ENCODE measurements at regions of chr9 and their contacts with region 1.

Region 1: DNA sequence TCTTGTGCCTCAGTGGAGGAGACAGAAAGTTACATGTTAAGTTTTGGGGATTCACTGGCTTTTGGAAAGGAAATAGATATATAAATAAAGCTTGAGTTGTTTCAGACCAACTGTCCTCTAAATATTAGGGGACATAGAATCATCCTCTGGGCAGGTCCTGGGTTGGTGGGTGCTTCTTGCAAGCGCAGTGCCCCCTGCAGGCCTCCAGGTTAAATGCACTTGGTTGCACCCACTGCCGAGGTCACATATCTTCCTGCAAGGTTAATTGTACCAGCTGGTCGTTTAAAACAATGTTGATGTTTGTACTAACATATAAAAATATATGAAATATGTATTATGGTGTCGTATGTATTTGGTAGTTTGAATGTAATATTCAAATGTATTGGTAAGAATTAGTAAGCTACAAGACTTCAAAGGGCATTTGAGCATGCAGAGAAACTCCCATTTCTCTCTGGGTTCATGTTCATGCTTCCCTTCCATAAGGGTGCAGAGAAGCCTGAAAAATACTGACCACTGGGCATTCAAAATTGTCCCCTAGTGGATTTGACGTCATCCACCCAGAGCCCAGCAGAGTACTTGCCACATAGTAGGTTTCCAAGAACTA is 87.0 kb downstream of the ZNF618 start:
- DNase-seq: peak; percentile 54 to 68
- ATAC-seq: peak; percentile 74 to 88 (median 85)
- H3K4me3 ChIP-seq: no peak overlapping the region
- H3K27ac ChIP-seq: no peak overlapping the region
- H3K4me1 ChIP-seq: no peaks in the 10 kb centered on the region
- H3K27me3 ChIP-seq: no peaks in the 10 kb centered on the region
- CTCF ChIP-seq: peak; percentile 83

Region 2: GRCh38 chr9:113682297-113682771 is 280.8 kb before region 1 on chr9:
- intact Hi-C with region 1: loop called in 1 of 2 experiments (anchors 10 kb)
- DNase-seq: peak; percentile 64 to 70
- ATAC-seq: peak; percentile 49 to 69 (median 66)
- H3K4me3 ChIP-seq: no peak overlapping the region
- H3K27ac ChIP-seq: no peak overlapping the region
- H3K4me1 ChIP-seq: no peaks in the 10 kb centered on the region
- H3K27me3 ChIP-seq: peaks cover 0 to 11% (median under 1%) of the 10 kb centered on the region in 3 donors
- CTCF ChIP-seq: peak; percentile 87

Region 3: DNA sequence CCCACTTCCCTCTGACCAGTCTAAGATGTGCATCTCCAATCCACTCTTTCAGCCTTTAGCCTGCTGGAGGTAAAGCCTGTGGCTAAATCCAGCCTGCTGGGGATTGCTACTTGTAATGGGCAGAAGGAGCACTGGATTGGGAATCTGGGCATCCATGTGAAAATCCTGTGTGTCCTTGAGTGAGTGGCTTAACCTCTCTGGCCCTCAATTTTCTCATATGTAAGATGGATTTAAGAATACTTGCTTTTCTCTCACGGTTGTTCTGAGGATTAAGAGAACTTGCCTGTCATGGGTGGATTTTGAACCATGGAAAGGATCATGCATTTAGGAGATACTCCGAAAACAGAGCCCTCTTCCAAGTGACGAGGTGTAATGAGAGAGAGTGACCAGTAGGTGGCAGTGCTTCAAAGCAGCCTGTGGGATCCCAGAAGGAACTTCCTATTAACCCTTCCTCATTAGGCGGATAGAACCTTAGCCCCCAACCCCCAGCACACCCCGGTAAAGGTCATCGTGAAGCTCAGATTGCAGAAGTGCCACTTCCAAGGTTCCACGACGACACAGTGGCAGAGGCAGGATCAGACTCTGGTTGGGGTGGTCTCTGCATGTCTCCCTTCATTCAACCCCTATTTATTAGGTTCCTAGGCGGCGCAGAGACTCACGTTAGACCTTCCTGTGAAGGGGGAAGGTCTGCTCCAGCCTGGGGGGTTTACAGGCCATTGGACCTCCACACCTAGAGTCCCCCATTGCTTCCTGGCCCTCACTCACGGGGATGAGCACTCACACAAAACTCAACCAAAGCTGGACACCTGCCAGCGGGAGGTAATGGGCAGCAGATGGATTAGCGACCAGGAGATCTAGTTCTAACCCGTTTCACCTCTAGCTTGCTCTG is 155.7 kb before region 1 on chr9:
- intact Hi-C with region 1: loop called (anchors 2 to 5 kb)
- DNase-seq: peak in 1 of 2 donors; percentile 30
- ATAC-seq: peak; percentile 78 to 91 (median 82)
- H3K4me3 ChIP-seq: peak overlapping the region; percentile 51
- H3K27ac ChIP-seq: no peak overlapping the region
- H3K4me1 ChIP-seq: no peaks in the 10 kb centered on the region
- H3K27me3 ChIP-seq: no peaks in the 10 kb centered on the region
- CTCF ChIP-seq: peak; percentile 93

Region 4: GRCh38 chr9:113853324-113853723 is 109.8 kb before region 1 on chr9:
- intact Hi-C with region 1: loop called in 1 of 2 experiments (anchors 10 kb)
- DNase-seq: no peak
- ATAC-seq: peak in 2 of 4 donors; percentile 60 to 61
- H3K4me3 ChIP-seq: no peak overlapping the region
- H3K27ac ChIP-seq: no peak overlapping the region
- H3K4me1 ChIP-seq: no peaks in the 10 kb centered on the region
- H3K27me3 ChIP-seq: no peaks in the 10 kb centered on the region
- CTCF ChIP-seq: peak; percentile 48

Region 5: DNA sequence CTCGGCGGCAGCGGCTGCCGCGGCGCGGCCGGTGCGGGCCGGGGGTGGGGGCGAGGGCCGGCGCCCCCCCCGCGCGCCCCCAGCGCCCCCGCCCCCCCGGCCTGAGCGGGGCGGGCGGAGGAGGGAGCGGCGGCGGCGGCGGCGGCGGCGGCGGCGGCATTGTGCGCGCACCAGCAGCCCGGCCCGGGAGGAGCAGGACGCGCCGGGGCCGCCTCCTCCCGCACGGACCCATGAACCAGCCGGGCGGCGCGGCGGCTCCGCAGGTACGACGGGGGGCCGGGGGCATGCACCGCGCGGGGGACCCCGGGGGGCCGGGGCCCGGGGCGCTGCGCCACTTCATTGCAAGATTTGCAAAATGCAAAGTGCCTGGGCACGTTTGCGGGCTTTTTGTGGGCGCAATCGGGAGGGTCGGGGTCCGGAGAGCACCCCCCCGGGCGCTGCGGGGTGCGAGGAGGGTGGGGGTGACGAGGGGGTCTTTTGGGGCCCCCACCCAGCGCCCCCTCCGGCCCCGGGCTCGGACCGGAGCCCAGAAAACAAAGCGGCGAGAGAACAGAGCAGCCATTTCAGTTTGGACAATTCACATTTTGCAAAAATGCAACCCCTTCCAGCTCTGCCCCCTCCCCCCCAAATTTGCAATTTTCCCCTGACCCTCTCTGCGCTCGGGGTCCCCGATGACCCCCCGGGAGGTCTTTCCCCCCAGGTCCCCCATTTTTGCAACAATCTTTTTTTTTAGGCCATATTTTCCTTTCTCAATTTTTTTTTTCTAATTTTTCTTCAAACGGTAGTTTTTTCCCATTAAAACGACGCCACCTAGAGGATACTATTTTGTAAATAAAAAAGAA is 86.7 kb before region 1 on chr9 and contains the start of gene ZNF618:
- intact Hi-C with region 1: loop called in 1 of 2 experiments (anchors 2 kb)
- DNase-seq: peak; percentile 30 to 61
- ATAC-seq: peak; percentile 53 to 80 (median 72)
- H3K4me3 ChIP-seq: peak within 1 kb of the TSS; percentile 93
- H3K27ac ChIP-seq: peak within 1 kb of the TSS; percentile 63
- H3K4me1 ChIP-seq: peaks cover 5% of the 10 kb centered on the region
- H3K27me3 ChIP-seq: no peaks in the 10 kb centered on the region
- CTCF ChIP-seq: no peak
- total RNA-seq, gene ZNF618: 1.2 to 2.7 (median 1.3) TPM

Region 6: DNA sequence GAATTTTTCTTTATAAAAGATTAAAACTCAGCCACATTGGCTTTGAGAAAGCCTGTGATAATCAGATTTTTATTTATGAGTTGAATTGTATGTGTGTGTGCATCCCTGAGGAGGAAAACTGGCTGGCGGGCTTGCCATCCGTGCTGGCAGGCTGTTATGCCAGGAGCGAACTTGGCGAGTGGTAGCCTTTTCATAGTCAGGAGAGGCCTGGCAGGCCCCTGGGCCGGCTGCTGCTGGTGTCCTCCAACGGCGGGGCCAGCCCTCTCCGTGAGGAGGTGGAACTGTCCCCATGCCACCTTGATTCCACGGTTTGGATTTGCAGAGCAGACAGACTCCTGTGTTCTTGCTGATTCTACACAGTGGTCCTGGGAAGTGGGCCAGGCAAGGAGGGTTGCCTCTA is 43.7 kb before region 1 on chr9:
- intact Hi-C with region 1: loop called in 1 of 2 experiments (anchors 2 kb)
- DNase-seq: peak; percentile 27 to 70
- ATAC-seq: peak; percentile 81 to 90 (median 86)
- H3K4me3 ChIP-seq: peak overlapping the region; percentile 8
- H3K27ac ChIP-seq: peak overlapping the region; percentile 56
- H3K4me1 ChIP-seq: peaks cover 22% of the 10 kb centered on the region
- H3K27me3 ChIP-seq: no peaks in the 10 kb centered on the region
- CTCF ChIP-seq: no peak

Region 7: DNA sequence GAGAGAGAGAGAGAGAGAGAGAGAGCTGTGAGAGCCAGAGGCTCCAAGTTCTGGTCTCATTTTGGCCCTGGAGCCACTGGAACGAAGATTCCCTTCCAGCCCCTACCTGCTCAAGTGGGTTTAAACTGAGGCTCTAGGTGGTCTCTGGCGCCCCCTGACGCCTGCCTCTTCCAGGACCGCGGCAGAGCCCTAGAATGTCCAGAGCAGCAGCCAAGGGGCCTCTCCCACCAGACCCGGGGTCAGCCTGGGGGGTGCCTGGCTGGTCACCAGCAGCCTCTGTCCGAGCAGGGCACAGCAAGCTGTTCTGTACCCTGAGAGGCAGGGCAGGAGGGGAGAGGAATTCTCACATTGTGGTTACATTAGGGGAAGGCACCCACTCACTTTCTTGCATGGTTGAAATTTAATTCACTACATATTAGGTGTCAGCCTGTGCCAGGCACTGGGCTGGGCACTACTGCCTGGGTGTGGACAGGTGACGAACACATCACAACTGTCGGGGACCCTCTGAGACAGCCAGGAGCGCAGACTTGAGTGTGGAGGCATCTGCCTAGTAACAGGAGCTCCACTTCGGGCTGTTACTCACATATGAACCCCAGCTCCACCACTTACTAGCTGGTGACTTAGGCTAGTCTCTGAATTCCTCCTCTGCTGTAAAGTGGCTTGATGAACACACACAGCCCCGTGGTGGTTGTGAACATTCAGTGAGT is 70.4 kb after region 1 on chr9:
- intact Hi-C with region 1: loop called in 1 of 2 experiments (anchors 5 kb)
- DNase-seq: peak; percentile 49 to 68
- ATAC-seq: peak; percentile 66 to 86 (median 79)
- H3K4me3 ChIP-seq: no peak overlapping the region
- H3K27ac ChIP-seq: no peak overlapping the region
- H3K4me1 ChIP-seq: peaks cover 5% of the 10 kb centered on the region
- H3K27me3 ChIP-seq: no peaks in the 10 kb centered on the region
- CTCF ChIP-seq: peak; percentile 64

Measured in psoas muscle (tissue), 8 donors.